Activated CD4-positive, alpha-beta T cell treated with anti-CD3 and anti-CD28 coated beads for 36 hours (primary cell): ENCODE measurements at regions of chr5 and their contacts with region 1.

Region 1: DNA sequence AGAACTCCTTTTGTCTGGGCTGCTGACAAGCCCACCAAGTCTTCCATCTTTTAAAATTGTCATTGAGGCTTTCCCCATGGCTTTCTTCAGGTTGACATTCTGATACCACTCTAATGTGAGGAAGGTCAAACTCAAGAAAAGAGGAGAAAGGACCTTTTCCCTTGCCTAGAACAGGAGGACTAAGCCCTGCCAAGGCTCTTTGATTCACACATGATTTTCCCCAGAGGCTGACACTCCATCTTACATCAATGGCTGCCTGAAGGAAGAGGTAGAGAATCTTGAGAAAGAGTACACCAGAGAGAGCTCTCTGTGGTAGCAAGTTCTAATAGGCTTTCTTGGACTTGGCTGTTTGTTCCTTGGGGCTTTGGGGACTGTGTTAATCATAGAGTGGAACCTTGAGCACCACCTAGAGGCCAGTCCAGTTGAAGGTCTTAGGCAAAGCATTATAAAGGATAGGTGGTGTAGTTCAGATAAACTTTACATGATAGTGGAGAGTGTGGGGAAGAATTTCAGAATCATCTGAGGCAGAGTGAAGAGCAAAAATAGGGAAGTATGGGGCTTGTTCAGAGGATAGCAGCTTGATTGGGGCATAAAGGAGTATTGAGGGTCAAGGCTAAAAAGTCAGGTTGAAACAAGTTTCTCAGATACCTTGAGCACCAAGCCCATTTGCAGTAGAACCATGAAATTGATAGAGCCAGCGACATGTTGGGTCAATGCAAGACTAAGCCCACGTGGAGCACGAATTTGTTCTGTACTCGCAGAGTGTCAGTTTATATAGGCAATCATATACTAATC is 36.7 kb downstream of the NDFIP1 start:
- DNase-seq: peak; percentile 78
- ATAC-seq: peak; percentile 93
- H3K4me3 Mint-ChIP-seq: no peak overlapping the region
- H3K27ac Mint-ChIP-seq: no peak overlapping the region
- H3K4me1 Mint-ChIP-seq: peaks cover 7% of the 10 kb centered on the region
- H3K27me3 Mint-ChIP-seq: no peaks in the 10 kb centered on the region

Region 2: DNA sequence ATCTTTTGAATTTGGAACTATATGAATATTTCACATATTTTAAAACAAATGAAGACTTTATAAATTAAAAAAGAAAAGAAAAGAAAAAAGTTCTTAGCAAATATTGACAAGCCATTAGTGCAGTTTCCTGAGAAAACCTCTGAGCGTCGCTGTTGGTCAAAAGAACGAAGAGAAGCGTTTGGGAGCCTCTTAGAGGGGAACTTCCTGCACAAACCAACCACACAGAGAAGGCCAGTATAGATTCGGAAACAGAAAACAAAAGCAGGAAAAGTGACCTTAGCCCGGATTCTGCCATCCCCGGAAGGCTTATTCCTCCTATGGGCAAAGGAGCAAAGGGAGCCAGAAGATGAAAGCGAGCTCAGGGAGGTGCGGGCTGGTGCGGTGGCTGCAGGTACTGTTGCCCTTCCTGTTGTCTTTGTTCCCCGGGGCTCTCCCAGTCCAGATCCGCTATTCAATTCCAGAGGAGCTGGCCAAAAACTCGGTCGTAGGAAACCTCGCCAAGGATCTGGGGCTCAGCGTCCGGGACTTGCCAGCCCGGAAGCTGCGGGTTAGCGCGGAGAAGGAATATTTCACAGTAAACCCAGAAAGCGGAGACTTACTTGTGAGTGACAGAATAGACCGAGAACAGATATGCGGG is 785.4 kb before region 1 on chr5 and contains the start of gene PCDHGB2:
- CTCF ChIA-PET with region 1: no interaction called
- POLR2A ChIA-PET with region 1: no interaction called
- intact Hi-C with region 1: no loop called
- DNase-seq: no peak
- ATAC-seq: peak; percentile 19
- H3K4me3 Mint-ChIP-seq: peak within 1 kb of the TSS; percentile 61
- H3K27ac Mint-ChIP-seq: no peak within 1 kb of the TSS
- H3K4me1 Mint-ChIP-seq: peaks cover 2% of the 10 kb centered on the region
- H3K27me3 Mint-ChIP-seq: peaks cover 76% of the 10 kb centered on the region
- total RNA-seq, gene PCDHGB2: 0.07 to 0.18 TPM

Region 3: GRCh38 chr5:142000703-142001484 is 144.4 kb before region 1 on chr5:
- CTCF ChIA-PET with region 1: interaction called, 352 read pairs
- POLR2A ChIA-PET with region 1: no interaction called
- intact Hi-C with region 1: loop called in 1 of 2 experiments (anchors 2 kb)
- DNase-seq: peak; percentile 55
- ATAC-seq: peak; percentile 59
- H3K4me3 Mint-ChIP-seq: no peak overlapping the region
- H3K27ac Mint-ChIP-seq: peak overlapping the region; percentile 72
- H3K4me1 Mint-ChIP-seq: peaks cover 35% of the 10 kb centered on the region
- H3K27me3 Mint-ChIP-seq: no peaks in the 10 kb centered on the region

Region 4: GRCh38 chr5:142006363-142007236 is 138.7 kb before region 1 on chr5:
- CTCF ChIA-PET with region 1: interaction called, 352 read pairs
- POLR2A ChIA-PET with region 1: interaction called, 3 read pairs
- intact Hi-C with region 1: loop called in 1 of 2 experiments (anchors 2 kb)
- DNase-seq: peak; percentile 85
- ATAC-seq: peak; percentile 90
- H3K4me3 Mint-ChIP-seq: peak overlapping the region; percentile 31
- H3K27ac Mint-ChIP-seq: peak overlapping the region; percentile 89
- H3K4me1 Mint-ChIP-seq: peaks cover 70% of the 10 kb centered on the region
- H3K27me3 Mint-ChIP-seq: no peaks in the 10 kb centered on the region

Region 5: GRCh38 chr5:142128675-142129208 is 16.6 kb before region 1 on chr5:
- CTCF ChIA-PET with region 1: interaction called, 14 read pairs
- POLR2A ChIA-PET with region 1: no interaction called
- intact Hi-C with region 1: no loop called
- DNase-seq: no peak
- ATAC-seq: peak; percentile 59
- H3K4me3 Mint-ChIP-seq: no peak overlapping the region
- H3K27ac Mint-ChIP-seq: peak overlapping the region; percentile 70
- H3K4me1 Mint-ChIP-seq: peaks cover 57% of the 10 kb centered on the region
- H3K27me3 Mint-ChIP-seq: no peaks in the 10 kb centered on the region